HepG2 (cell line): ENCODE measurements at regions of chr3 and their contacts with region 1.

Region 1: GRCh38 chr3:52154117-52155094 is at the start of gene POC1A:
- DNase-seq: peak; percentile 97
- ATAC-seq: peak; percentile 96
- H3K4me3 ChIP-seq: peak within 1 kb of the TSS; percentile 84 to 87 (median 85)
- H3K27ac ChIP-seq: peak within 1 kb of the TSS; percentile 90
- H3K4me1 ChIP-seq: peaks cover 36% of the 10 kb centered on the region
- H3K27me3 ChIP-seq: no peaks in the 10 kb centered on the region
- CTCF ChIP-seq: peak; percentile 25
- EP300 ChIP-seq: peak; percentile 36; a peak in 3 of 4 replicates
- POLR2A ChIP-seq: peak; percentile 74 to 76
- RAD21 ChIP-seq: peak; percentile 10; the same call in 1 of the 2 replicates
- total RNA-seq, gene POC1A: 20.0 and 22.5 TPM in 2 replicates

Region 2: GRCh38 chr3:51941798-51942602 is 212.4 kb before region 1 on chr3 and contains the starts of genes PARP3 and RRP9:
- CTCF ChIA-PET with region 1: no interaction called
- POLR2A ChIA-PET with region 1: interaction called, 11 read pairs
- in situ Hi-C with region 1: no loop called
- intact Hi-C with region 1: no loop called
- DNase-seq: peak; percentile 99
- ATAC-seq: peak; percentile 88
- H3K4me3 ChIP-seq: peak within 1 kb of the TSS; percentile 80 to 88 (median 84)
- H3K27ac ChIP-seq: peak within 1 kb of the TSS; percentile 93
- H3K4me1 ChIP-seq: peaks cover 33% of the 10 kb centered on the region
- H3K27me3 ChIP-seq: no peaks in the 10 kb centered on the region; a peak in 1 of 5 replicates
- CTCF ChIP-seq: peak; percentile 100
- EP300 ChIP-seq: peak in 1 of 2 experiments; percentile 20; a peak in 1 of 4 replicates
- POLR2A ChIP-seq: peak in 1 of 2 experiments; percentile 45; a peak in 1 of 4 replicates
- RAD21 ChIP-seq: peak; percentile 99
- total RNA-seq, gene PARP3: 7.7 and 11.2 TPM in 2 replicates
- total RNA-seq, gene RRP9: 39.4 and 44.0 TPM in 2 replicates

Region 3: GRCh38 chr3:51995346-51996163 is 158.9 kb before region 1 on chr3 and contains the start of gene RPL29:
- CTCF ChIA-PET with region 1: no interaction called
- POLR2A ChIA-PET with region 1: interaction called, 30 read pairs
- in situ Hi-C with region 1: no loop called
- intact Hi-C with region 1: no loop called
- DNase-seq: peak; percentile 87
- ATAC-seq: peak; percentile 79
- H3K4me3 ChIP-seq: peak within 1 kb of the TSS; percentile 73 to 90 (median 83)
- H3K27ac ChIP-seq: peak within 1 kb of the TSS; percentile 87
- H3K4me1 ChIP-seq: peaks cover 63% of the 10 kb centered on the region
- H3K27me3 ChIP-seq: no peaks in the 10 kb centered on the region; a peak in 1 of 5 replicates
- CTCF ChIP-seq: peak; percentile 49
- EP300 ChIP-seq: peak; percentile 32 to 50; a peak in 2 of 4 replicates
- POLR2A ChIP-seq: peak; percentile 94 to 95
- RAD21 ChIP-seq: peak; percentile 29; the same call in 1 of the 2 replicates
- total RNA-seq, gene RPL29: 1,348 and 1,507 TPM in 2 replicates

Region 4: GRCh38 chr3:52070724-52071621 is 83.4 kb before region 1 on chr3:
- CTCF ChIA-PET with region 1: no interaction called
- POLR2A ChIA-PET with region 1: no interaction called
- in situ Hi-C with region 1: no loop called
- intact Hi-C with region 1: no loop called
- DNase-seq: no peak
- ATAC-seq: no peak
- H3K4me3 ChIP-seq: no peak overlapping the region
- H3K27ac ChIP-seq: no peak overlapping the region
- H3K4me1 ChIP-seq: peaks cover 14% of the 10 kb centered on the region
- H3K27me3 ChIP-seq: peaks cover 2 to 3% of the 10 kb centered on the region in 2 experiments; a peak in 3 of 5 replicates
- CTCF ChIP-seq: no peak
- EP300 ChIP-seq: no peak
- POLR2A ChIP-seq: no peak
- RAD21 ChIP-seq: no peak

Region 5: GRCh38 chr3:52121464-52121805 is 33.0 kb before region 1 on chr3:
- CTCF ChIA-PET with region 1: no interaction called
- POLR2A ChIA-PET with region 1: no interaction called
- in situ Hi-C with region 1: no loop called
- intact Hi-C with region 1: no loop called
- DNase-seq: no peak
- ATAC-seq: no peak
- H3K4me3 ChIP-seq: no peak overlapping the region
- H3K27ac ChIP-seq: no peak overlapping the region
- H3K4me1 ChIP-seq: no peaks in the 10 kb centered on the region
- H3K27me3 ChIP-seq: no peaks in the 10 kb centered on the region
- CTCF ChIP-seq: no peak
- EP300 ChIP-seq: no peak
- POLR2A ChIP-seq: no peak
- RAD21 ChIP-seq: no peak

Region 6: DNA sequence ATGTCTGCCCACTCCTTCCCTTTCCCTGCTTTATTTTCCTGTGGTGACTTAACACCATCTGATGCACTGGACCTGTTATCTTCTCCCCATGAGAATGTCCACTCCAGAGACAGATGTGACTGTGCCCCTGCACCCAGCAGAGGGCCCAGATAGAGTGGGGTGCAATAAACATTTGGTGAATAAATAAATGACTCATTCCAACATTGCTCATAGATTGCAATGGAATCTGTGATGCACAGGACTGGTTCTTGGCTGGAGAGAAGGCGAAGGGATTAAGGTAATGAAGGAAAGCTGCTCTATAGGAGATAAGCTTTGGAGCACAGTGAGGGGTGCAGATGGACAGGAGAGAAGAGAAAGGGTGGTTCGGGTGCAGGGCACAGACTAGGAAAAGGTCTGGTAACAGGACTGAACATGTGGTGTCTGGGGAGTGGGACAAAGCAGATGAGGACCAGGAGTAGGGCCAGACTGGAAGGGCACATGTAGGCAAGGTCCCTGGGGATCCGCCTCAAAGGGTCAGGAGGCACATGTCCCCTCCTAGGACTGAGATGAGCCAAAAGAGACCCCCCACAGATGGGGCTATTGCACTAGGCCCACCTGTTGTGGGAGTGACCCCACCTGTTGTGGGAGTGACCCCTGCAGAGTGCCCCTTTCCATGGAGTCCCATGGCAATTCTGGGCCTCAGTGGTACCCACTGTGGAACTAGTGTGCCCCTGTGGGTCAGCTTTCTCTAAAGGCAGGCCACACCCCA is 17.3 kb after region 1 on chr3:
- CTCF ChIA-PET with region 1: no interaction called
- POLR2A ChIA-PET with region 1: interaction called, 30 read pairs
- in situ Hi-C with region 1: no loop called
- intact Hi-C with region 1: no loop called
- DNase-seq: no peak
- ATAC-seq: peak; percentile 24
- H3K4me3 ChIP-seq: no peak overlapping the region
- H3K27ac ChIP-seq: no peak overlapping the region
- H3K4me1 ChIP-seq: peaks cover 59% of the 10 kb centered on the region
- H3K27me3 ChIP-seq: no peaks in the 10 kb centered on the region
- CTCF ChIP-seq: no peak
- EP300 ChIP-seq: no peak
- POLR2A ChIP-seq: no peak
- RAD21 ChIP-seq: no peak

Region 7: GRCh38 chr3:52197842-52198668 is 43.6 kb after region 1 on chr3 and contains the start of gene ALAS1:
- CTCF ChIA-PET with region 1: no interaction called
- POLR2A ChIA-PET with region 1: interaction called, 12 read pairs
- in situ Hi-C with region 1: no loop called
- intact Hi-C with region 1: no loop called
- DNase-seq: peak; percentile 82
- ATAC-seq: peak; percentile 91
- H3K4me3 ChIP-seq: peak within 1 kb of the TSS; percentile 86 to 94 (median 90)
- H3K27ac ChIP-seq: peak within 1 kb of the TSS; percentile 57
- H3K4me1 ChIP-seq: peaks cover 67% of the 10 kb centered on the region
- H3K27me3 ChIP-seq: 0 out of 5 replicates have a peak, but pooled peaks cover 0 to 5% of the 10 kb centered on the region in 2 experiments
- CTCF ChIP-seq: no peak; the same call in 1 of the 2 replicates
- EP300 ChIP-seq: no peak
- POLR2A ChIP-seq: peak; percentile 87 to 98
- RAD21 ChIP-seq: peak; percentile 29; the same call in 1 of the 2 replicates
- total RNA-seq, gene ALAS1: 36.0 and 40.2 TPM in 2 replicates